IMR-90 (cell line): ENCODE measurements at regions of chr10 and their contacts with region 1.

Region 1: GRCh38 chr10:97731346-97732051 is 5.4 kb upstream of the ZFYVE27 start:
- DNase-seq: peak; percentile 76
- ATAC-seq: peak; percentile 95
- H3K4me3 ChIP-seq: no peak overlapping the region
- H3K27ac ChIP-seq: no peak overlapping the region
- H3K4me1 ChIP-seq: peaks cover 2% of the 10 kb centered on the region
- H3K27me3 ChIP-seq: no peaks in the 10 kb centered on the region
- CTCF ChIP-seq: peak; percentile 95
- POLR2A ChIP-seq: peak; percentile 25; the same call in 1 of the 2 replicates
- RAD21 ChIP-seq: peak; percentile 96

Region 2: GRCh38 chr10:97407211-97407951 is 324.1 kb before region 1 on chr10:
- CTCF ChIA-PET with region 1: no interaction called
- POLR2A ChIA-PET with region 1: no interaction called
- dilution Hi-C with region 1: no loop called
- in situ Hi-C with region 1: no loop called
- intact Hi-C with region 1: loop called (anchors 1 kb)
- DNase-seq: peak; percentile 78
- ATAC-seq: peak; percentile 99
- H3K4me3 ChIP-seq: no peak overlapping the region
- H3K27ac ChIP-seq: no peak overlapping the region
- H3K4me1 ChIP-seq: no peaks in the 10 kb centered on the region
- H3K27me3 ChIP-seq: no peaks in the 10 kb centered on the region
- CTCF ChIP-seq: peak; percentile 69
- POLR2A ChIP-seq: no peak
- RAD21 ChIP-seq: peak; percentile 53

Region 3: DNA sequence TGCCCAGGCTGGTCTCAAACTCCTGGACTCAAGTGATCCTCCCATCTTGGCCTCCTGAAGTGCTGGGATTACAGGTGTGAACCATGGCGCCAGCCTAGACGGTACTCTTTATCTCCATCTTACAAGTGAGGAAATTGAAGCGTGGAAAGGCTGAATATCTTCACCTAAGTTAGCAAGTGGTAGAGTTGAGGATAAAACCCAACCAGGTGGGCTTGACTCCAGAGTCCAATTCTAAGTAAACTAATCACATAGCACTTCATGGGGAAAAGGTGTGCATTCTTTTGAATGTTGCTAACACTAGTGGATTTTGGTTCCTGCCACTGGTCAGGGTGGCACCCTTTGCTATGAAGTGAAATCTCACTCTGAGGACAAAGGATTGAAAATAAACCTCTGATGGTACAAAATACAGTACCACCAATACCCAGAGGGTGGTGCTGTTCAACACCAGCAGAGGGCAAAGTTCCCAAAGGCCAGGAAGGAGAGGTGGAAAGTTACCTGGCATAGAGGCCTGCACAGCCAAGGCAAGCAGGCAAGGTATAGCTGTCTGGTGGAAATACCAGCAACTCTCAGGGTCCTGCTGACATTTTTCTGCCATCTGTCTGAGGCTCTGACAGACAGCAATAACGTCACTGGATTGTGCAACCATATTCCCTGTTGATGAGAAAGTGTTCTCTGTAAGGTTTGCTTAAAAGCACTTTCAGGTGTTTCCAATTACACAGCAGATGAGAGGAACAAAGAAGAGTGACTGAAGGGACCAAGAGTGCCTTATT is 268.0 kb before region 1 on chr10:
- CTCF ChIA-PET with region 1: no interaction called
- POLR2A ChIA-PET with region 1: no interaction called
- dilution Hi-C with region 1: no loop called
- in situ Hi-C with region 1: no loop called
- intact Hi-C with region 1: loop called (anchors 1 kb)
- DNase-seq: peak; percentile 69
- ATAC-seq: peak; percentile 67
- H3K4me3 ChIP-seq: no peak overlapping the region
- H3K27ac ChIP-seq: no peak overlapping the region
- H3K4me1 ChIP-seq: peaks cover 9% of the 10 kb centered on the region
- H3K27me3 ChIP-seq: no peaks in the 10 kb centered on the region
- CTCF ChIP-seq: peak; percentile 83
- POLR2A ChIP-seq: no peak
- RAD21 ChIP-seq: peak; percentile 77

Region 4: GRCh38 chr10:97572214-97572989 is 159.1 kb before region 1 on chr10 and contains the start of gene ANKRD2:
- CTCF ChIA-PET with region 1: interaction called, 3 read pairs
- POLR2A ChIA-PET with region 1: no interaction called
- dilution Hi-C with region 1: no loop called
- in situ Hi-C with region 1: loop called (anchors 10 kb)
- intact Hi-C with region 1: loop called (anchors 5 kb)
- DNase-seq: peak; percentile 79
- ATAC-seq: peak; percentile 81
- H3K4me3 ChIP-seq: no peak within 1 kb of the TSS
- H3K27ac ChIP-seq: no peak within 1 kb of the TSS
- H3K4me1 ChIP-seq: peaks cover 16% of the 10 kb centered on the region
- H3K27me3 ChIP-seq: no peaks in the 10 kb centered on the region
- CTCF ChIP-seq: peak; percentile 91
- POLR2A ChIP-seq: no peak
- RAD21 ChIP-seq: peak; percentile 93
- total RNA-seq, gene ANKRD2: 0.28 and 0.36 TPM in 2 replicates

Region 5: GRCh38 chr10:97676770-97677581 is 54.5 kb before region 1 on chr10:
- CTCF ChIA-PET with region 1: interaction called, 3 read pairs
- POLR2A ChIA-PET with region 1: no interaction called
- dilution Hi-C with region 1: no loop called
- in situ Hi-C with region 1: loop called (anchors 5 kb)
- intact Hi-C with region 1: loop called (anchors 1 kb)
- DNase-seq: peak; percentile 63
- ATAC-seq: peak; percentile 82
- H3K4me3 ChIP-seq: no peak overlapping the region
- H3K27ac ChIP-seq: no peak overlapping the region
- H3K4me1 ChIP-seq: peaks cover 1% of the 10 kb centered on the region; the same call in 1 of the 2 replicates
- H3K27me3 ChIP-seq: no peaks in the 10 kb centered on the region
- CTCF ChIP-seq: peak; percentile 80
- POLR2A ChIP-seq: no peak
- RAD21 ChIP-seq: peak; percentile 85

Region 6: GRCh38 chr10:97701438-97702069 is 29.9 kb before region 1 on chr10:
- CTCF ChIA-PET with region 1: interaction called, 17 read pairs
- POLR2A ChIA-PET with region 1: interaction called, 3 read pairs
- dilution Hi-C with region 1: no loop called
- in situ Hi-C with region 1: no loop called
- intact Hi-C with region 1: loop called (anchors 1 kb)
- DNase-seq: peak; percentile 77
- ATAC-seq: peak; percentile 100
- H3K4me3 ChIP-seq: no peak overlapping the region
- H3K27ac ChIP-seq: no peak overlapping the region
- H3K4me1 ChIP-seq: no peaks in the 10 kb centered on the region; the same call in 1 of the 2 replicates
- H3K27me3 ChIP-seq: no peaks in the 10 kb centered on the region
- CTCF ChIP-seq: peak; percentile 92
- POLR2A ChIP-seq: no peak
- RAD21 ChIP-seq: peak; percentile 90

Region 7: GRCh38 chr10:97714048-97714371 is 17.5 kb before region 1 on chr10:
- CTCF ChIA-PET with region 1: interaction called, 8 read pairs
- POLR2A ChIA-PET with region 1: interaction called, 11 read pairs
- dilution Hi-C with region 1: no loop called
- in situ Hi-C with region 1: no loop called
- intact Hi-C with region 1: loop called (anchors 1 kb)
- DNase-seq: peak; percentile 74
- ATAC-seq: peak; percentile 31
- H3K4me3 ChIP-seq: peak overlapping the region; percentile 97
- H3K27ac ChIP-seq: peak overlapping the region; percentile 99
- H3K4me1 ChIP-seq: peaks cover 30% of the 10 kb centered on the region
- H3K27me3 ChIP-seq: no peaks in the 10 kb centered on the region
- CTCF ChIP-seq: 0 out of 2 replicates have a peak, but pooled peaks have one; percentile 23
- POLR2A ChIP-seq: peak; percentile 2; the same call in 1 of the 2 replicates
- RAD21 ChIP-seq: no peak